MCF 10A (cell line): ENCODE measurements at regions of chr5 and their contacts with region 1.

Region 1: GRCh38 chr5:38441453-38442246 is 114.8 kb downstream of the LIFR start:
- DNase-seq: peak; percentile 92
- H3K4me3 Mint-ChIP-seq: no peak overlapping the region
- H3K27ac Mint-ChIP-seq: no peak overlapping the region
- H3K4me1 Mint-ChIP-seq: peaks cover 10% of the 10 kb centered on the region
- H3K27me3 Mint-ChIP-seq: no peaks in the 10 kb centered on the region
- CTCF ChIP-seq: peak; percentile 97

Region 2: GRCh38 chr5:38208782-38209378 is 232.8 kb before region 1 on chr5:
- CTCF ChIA-PET with region 1: interaction called, 5 read pairs
- POLR2A ChIA-PET with region 1: no interaction called
- intact Hi-C with region 1: loop called (anchors 2 kb)
- DNase-seq: peak; percentile 66
- H3K4me3 Mint-ChIP-seq: no peak overlapping the region
- H3K27ac Mint-ChIP-seq: no peak overlapping the region
- H3K4me1 Mint-ChIP-seq: peaks cover 11% of the 10 kb centered on the region
- H3K27me3 Mint-ChIP-seq: peaks cover 44% of the 10 kb centered on the region
- CTCF ChIP-seq: peak; percentile 77

Region 3: GRCh38 chr5:38426986-38427950 is 14.4 kb before region 1 on chr5:
- CTCF ChIA-PET with region 1: interaction called, 80 read pairs
- POLR2A ChIA-PET with region 1: interaction called, 7 read pairs
- intact Hi-C with region 1: no loop called
- DNase-seq: peak; percentile 65
- H3K4me3 Mint-ChIP-seq: no peak overlapping the region
- H3K27ac Mint-ChIP-seq: peak overlapping the region; percentile 80
- H3K4me1 Mint-ChIP-seq: peaks cover 12% of the 10 kb centered on the region
- H3K27me3 Mint-ChIP-seq: no peaks in the 10 kb centered on the region
- CTCF ChIP-seq: no peak

Region 4: GRCh38 chr5:38515646-38516045 is 74.0 kb after region 1 on chr5:
- CTCF ChIA-PET with region 1: interaction called, 14 read pairs
- POLR2A ChIA-PET with region 1: no interaction called
- intact Hi-C with region 1: loop called (anchors 1 kb)
- DNase-seq: peak; percentile 44
- H3K4me3 Mint-ChIP-seq: no peak overlapping the region
- H3K27ac Mint-ChIP-seq: no peak overlapping the region
- H3K4me1 Mint-ChIP-seq: no peaks in the 10 kb centered on the region
- H3K27me3 Mint-ChIP-seq: no peaks in the 10 kb centered on the region
- CTCF ChIP-seq: peak; percentile 16

Region 5: GRCh38 chr5:38556599-38557305 is 115.1 kb after region 1 on chr5 and contains the start of gene LIFR:
- CTCF ChIA-PET with region 1: interaction called, 62 read pairs
- POLR2A ChIA-PET with region 1: interaction called, 10 read pairs
- intact Hi-C with region 1: loop called (anchors 1 kb)
- DNase-seq: peak; percentile 81
- H3K4me3 Mint-ChIP-seq: peak within 1 kb of the TSS; percentile 81
- H3K27ac Mint-ChIP-seq: peak within 1 kb of the TSS; percentile 33
- H3K4me1 Mint-ChIP-seq: no peaks in the 10 kb centered on the region
- H3K27me3 Mint-ChIP-seq: no peaks in the 10 kb centered on the region
- CTCF ChIP-seq: no peak
- total RNA-seq, gene LIFR: 3.7 and 3.9 TPM in 2 replicates

Region 6: DNA sequence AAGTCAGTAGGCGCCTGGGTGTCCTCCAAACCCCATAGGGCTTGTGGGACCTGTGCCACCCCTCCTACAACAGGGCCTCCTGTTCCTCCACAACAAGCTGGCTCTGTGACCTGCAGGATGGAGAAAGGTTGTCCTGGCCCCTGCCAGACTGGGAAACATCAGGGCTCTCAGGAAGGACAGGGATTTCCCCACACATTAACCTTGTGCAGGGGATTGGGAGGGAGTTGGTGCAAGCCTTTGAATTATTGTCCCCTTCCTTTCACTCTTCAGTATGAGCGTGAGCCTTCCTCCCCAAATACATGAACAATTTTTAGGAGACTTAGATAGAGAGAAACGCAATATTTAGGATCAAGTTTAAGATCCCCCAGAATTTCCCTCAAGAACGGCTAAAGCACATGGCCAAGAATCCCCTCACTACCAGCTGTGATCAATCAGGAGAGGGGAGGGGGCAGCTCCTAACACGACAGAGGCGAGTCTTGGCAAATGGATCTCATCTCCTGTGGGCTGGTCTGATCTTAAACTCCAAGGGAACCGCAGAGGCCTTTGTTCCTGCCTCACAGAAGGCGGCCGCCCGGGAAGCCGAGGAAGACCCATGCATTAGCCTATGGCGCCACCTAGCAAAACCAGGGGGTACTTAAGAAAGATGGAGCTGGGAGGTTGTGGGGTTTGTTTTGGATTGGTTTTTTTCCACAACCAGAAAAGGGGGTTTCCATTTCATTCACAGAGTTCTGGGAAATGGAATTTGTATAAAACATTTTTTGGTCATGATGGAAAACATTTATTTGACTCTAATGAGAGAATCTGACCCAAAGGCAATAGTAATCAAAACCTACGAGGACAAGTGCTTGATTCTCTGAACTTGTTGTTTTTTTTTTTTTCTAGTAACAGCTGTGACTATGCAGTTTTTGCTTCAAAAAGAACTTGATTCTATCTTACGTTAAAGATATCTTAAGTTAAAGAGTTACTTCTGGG is 368.0 kb after region 1 on chr5:
- CTCF ChIA-PET with region 1: interaction called, 250 read pairs
- POLR2A ChIA-PET with region 1: interaction called, 13 read pairs
- intact Hi-C with region 1: loop called (anchors 1 kb)
- DNase-seq: peak; percentile 88
- H3K4me3 Mint-ChIP-seq: no peak overlapping the region
- H3K27ac Mint-ChIP-seq: no peak overlapping the region
- H3K4me1 Mint-ChIP-seq: peaks cover 31% of the 10 kb centered on the region
- H3K27me3 Mint-ChIP-seq: no peaks in the 10 kb centered on the region
- CTCF ChIP-seq: peak; percentile 84